IMR-90 (cell line): ENCODE measurements at regions of chr2 and their contacts with region 1.

Region 1: GRCh38 chr2:150767991-150768746 is 280.7 kb upstream of the RND3 start:
- DNase-seq: no peak
- ATAC-seq: no peak
- H3K4me3 ChIP-seq: no peak overlapping the region
- H3K27ac ChIP-seq: no peak overlapping the region
- H3K4me1 ChIP-seq: no peaks in the 10 kb centered on the region
- H3K27me3 ChIP-seq: no peaks in the 10 kb centered on the region
- CTCF ChIP-seq: no peak
- POLR2A ChIP-seq: no peak
- RAD21 ChIP-seq: no peak

Region 2: GRCh38 chr2:150735894-150736498 is 32.2 kb before region 1 on chr2:
- CTCF ChIA-PET with region 1: no interaction called
- POLR2A ChIA-PET with region 1: no interaction called
- dilution Hi-C with region 1: no loop called
- in situ Hi-C with region 1: no loop called
- intact Hi-C with region 1: loop called (anchors 2 kb)
- DNase-seq: no peak
- ATAC-seq: no peak
- H3K4me3 ChIP-seq: no peak overlapping the region
- H3K27ac ChIP-seq: no peak overlapping the region
- H3K4me1 ChIP-seq: no peaks in the 10 kb centered on the region
- H3K27me3 ChIP-seq: no peaks in the 10 kb centered on the region
- CTCF ChIP-seq: no peak
- POLR2A ChIP-seq: no peak
- RAD21 ChIP-seq: no peak

Region 3: DNA sequence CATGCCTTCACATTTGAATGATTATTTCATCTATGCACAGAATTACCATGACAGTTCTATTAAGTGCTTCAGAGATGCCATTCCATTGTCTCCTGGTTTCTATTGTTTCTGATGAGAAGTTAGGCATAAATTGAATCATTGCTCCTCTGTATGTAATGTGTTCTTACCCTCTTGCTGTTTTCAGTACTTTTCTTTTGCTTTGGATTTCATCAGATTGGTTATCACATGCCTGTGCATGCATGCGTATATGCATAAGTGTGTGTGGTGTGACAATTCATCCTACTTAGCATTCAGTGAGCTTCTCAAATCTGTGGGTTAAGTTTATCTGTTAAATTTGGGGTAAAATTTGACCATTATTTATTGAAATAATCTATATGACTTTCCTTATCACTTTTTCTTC is 17.4 kb before region 1 on chr2:
- CTCF ChIA-PET with region 1: no interaction called
- POLR2A ChIA-PET with region 1: no interaction called
- dilution Hi-C with region 1: no loop called
- in situ Hi-C with region 1: no loop called
- intact Hi-C with region 1: loop called (anchors 2 kb)
- DNase-seq: no peak
- ATAC-seq: no peak
- H3K4me3 ChIP-seq: no peak overlapping the region
- H3K27ac ChIP-seq: no peak overlapping the region
- H3K4me1 ChIP-seq: no peaks in the 10 kb centered on the region
- H3K27me3 ChIP-seq: no peaks in the 10 kb centered on the region
- CTCF ChIP-seq: no peak
- POLR2A ChIP-seq: no peak
- RAD21 ChIP-seq: no peak